Activated naive CD4-positive, alpha-beta T cell treated with anti-CD3 and anti-CD28 coated beads for 36 hours (primary cell): ENCODE measurements at regions of chr5 and their contacts with region 1.

Region 1: GRCh38 chr5:76544268-76544926 is 78.8 kb downstream of the F2RL2 start:
- DNase-seq: peak; percentile 84
- H3K4me3 Mint-ChIP-seq: peak overlapping the region; percentile 71
- H3K27ac Mint-ChIP-seq: peak overlapping the region; percentile 97
- H3K4me1 Mint-ChIP-seq: peaks cover 86% of the 10 kb centered on the region
- H3K27me3 Mint-ChIP-seq: no peaks in the 10 kb centered on the region

Region 2: GRCh38 chr5:75566710-75567309 is 977.6 kb before region 1 on chr5:
- CTCF ChIA-PET with region 1: no interaction called
- intact Hi-C with region 1: loop called (anchors 10 kb)
- DNase-seq: peak; percentile 84
- H3K4me3 Mint-ChIP-seq: peak overlapping the region; percentile 48
- H3K27ac Mint-ChIP-seq: peak overlapping the region; percentile 95
- H3K4me1 Mint-ChIP-seq: peaks cover 55% of the 10 kb centered on the region
- H3K27me3 Mint-ChIP-seq: no peaks in the 10 kb centered on the region

Region 3: GRCh38 chr5:76256116-76256889 is 288.1 kb before region 1 on chr5:
- CTCF ChIA-PET with region 1: interaction called, 3 read pairs
- intact Hi-C with region 1: loop called (anchors 1 kb)
- DNase-seq: peak; percentile 79
- H3K4me3 Mint-ChIP-seq: no peak overlapping the region
- H3K27ac Mint-ChIP-seq: no peak overlapping the region
- H3K4me1 Mint-ChIP-seq: peaks cover 2% of the 10 kb centered on the region
- H3K27me3 Mint-ChIP-seq: peaks cover 3% of the 10 kb centered on the region

Region 4: DNA sequence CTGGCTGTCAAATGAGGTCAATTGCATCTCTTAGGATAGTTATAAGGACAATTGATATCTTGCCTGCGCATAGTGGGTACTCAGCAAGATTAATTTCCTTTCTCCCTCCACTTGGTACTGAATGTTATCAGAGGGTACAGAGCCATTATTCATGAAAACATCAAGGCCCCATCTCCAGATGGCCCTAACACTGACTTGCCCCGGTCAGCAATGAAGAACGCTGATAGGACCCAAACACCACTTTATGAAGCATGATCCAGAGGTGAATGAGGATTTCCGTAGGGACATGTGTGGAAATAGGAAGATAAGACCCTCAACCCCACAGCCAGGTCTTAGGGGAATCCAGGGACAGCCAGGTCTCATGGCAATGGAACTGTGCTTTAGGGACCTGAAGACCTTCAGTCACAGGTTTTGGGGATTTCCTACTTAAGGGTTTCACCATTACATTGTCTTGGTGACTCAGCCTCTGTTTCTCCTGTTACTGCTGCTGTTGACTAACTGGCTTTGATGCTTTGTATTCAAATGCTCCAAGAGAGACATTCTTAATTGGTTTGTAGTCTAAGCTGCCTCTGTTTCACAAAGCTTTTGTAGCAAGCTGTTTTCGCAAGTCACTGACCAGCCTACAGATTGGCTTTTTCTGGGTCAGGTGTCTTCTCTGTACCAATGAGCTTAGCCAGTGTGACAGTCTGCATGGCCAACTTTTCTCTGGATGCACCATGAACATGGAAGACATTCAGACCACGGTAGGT is 176.6 kb before region 1 on chr5:
- CTCF ChIA-PET with region 1: interaction called, 3 read pairs
- intact Hi-C with region 1: loop called (anchors 1 kb)
- DNase-seq: peak; percentile 65
- H3K4me3 Mint-ChIP-seq: no peak overlapping the region
- H3K27ac Mint-ChIP-seq: peak overlapping the region; percentile 88
- H3K4me1 Mint-ChIP-seq: peaks cover 27% of the 10 kb centered on the region
- H3K27me3 Mint-ChIP-seq: no peaks in the 10 kb centered on the region

Region 5: DNA sequence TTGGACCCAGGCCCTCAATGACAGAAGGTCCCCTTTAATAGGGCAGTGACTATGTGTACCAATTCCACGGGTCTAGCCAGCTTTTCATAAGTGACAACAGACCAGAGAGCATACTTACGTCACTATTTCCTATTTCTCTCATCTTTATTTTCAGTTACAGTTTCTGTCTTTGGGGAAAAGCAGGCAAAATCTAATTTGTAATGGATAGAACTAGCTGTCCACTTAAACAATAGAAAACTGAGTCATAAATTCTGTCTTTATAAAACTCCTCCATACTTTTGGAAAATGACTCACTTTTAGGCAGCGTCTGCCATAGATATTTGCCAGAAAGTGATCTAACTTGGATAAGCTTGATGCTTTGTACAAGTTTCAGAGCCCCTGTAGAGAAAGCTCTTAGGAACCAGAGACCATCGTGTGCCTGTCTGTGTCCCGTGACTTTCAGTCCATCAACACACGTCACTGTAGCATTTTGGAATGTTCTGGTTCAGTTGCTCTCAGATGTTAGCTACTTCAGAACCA is 23.1 kb before region 1 on chr5:
- CTCF ChIA-PET with region 1: interaction called, 13 read pairs
- intact Hi-C with region 1: loop called (anchors 1 kb)
- DNase-seq: no peak
- H3K4me3 Mint-ChIP-seq: no peak overlapping the region
- H3K27ac Mint-ChIP-seq: peak overlapping the region; percentile 83
- H3K4me1 Mint-ChIP-seq: peaks cover 71% of the 10 kb centered on the region
- H3K27me3 Mint-ChIP-seq: no peaks in the 10 kb centered on the region

Region 6: GRCh38 chr5:76641514-76642120 is 97.2 kb after region 1 on chr5:
- CTCF ChIA-PET with region 1: interaction called, 3 read pairs
- intact Hi-C with region 1: loop called (anchors 1 kb)
- DNase-seq: peak; percentile 87
- H3K4me3 Mint-ChIP-seq: no peak overlapping the region
- H3K27ac Mint-ChIP-seq: no peak overlapping the region
- H3K4me1 Mint-ChIP-seq: peaks cover 4% of the 10 kb centered on the region
- H3K27me3 Mint-ChIP-seq: no peaks in the 10 kb centered on the region

Region 7: GRCh38 chr5:76790632-76791290 is 246.4 kb after region 1 on chr5:
- CTCF ChIA-PET with region 1: no interaction called
- intact Hi-C with region 1: loop called (anchors 2 kb)
- DNase-seq: peak; percentile 49
- H3K4me3 Mint-ChIP-seq: no peak overlapping the region
- H3K27ac Mint-ChIP-seq: peak overlapping the region; percentile 70
- H3K4me1 Mint-ChIP-seq: peaks cover 18% of the 10 kb centered on the region
- H3K27me3 Mint-ChIP-seq: no peaks in the 10 kb centered on the region